Activated naive CD4-positive, alpha-beta T cell treated with anti-CD3 and anti-CD28 coated beads for 36 hours (primary cell): ENCODE measurements at regions of chr1 and their contacts with region 1.

Region 1: GRCh38 chr1:32964461-32965250 is at the start of gene RNF19B:
- DNase-seq: peak; percentile 97
- H3K4me3 Mint-ChIP-seq: peak within 1 kb of the TSS; percentile 86
- H3K27ac Mint-ChIP-seq: peak within 1 kb of the TSS; percentile 82
- H3K4me1 Mint-ChIP-seq: peaks cover 48% of the 10 kb centered on the region
- H3K27me3 Mint-ChIP-seq: no peaks in the 10 kb centered on the region
- total RNA-seq, gene RNF19B: 12.5 to 13.3 TPM

Region 2: DNA sequence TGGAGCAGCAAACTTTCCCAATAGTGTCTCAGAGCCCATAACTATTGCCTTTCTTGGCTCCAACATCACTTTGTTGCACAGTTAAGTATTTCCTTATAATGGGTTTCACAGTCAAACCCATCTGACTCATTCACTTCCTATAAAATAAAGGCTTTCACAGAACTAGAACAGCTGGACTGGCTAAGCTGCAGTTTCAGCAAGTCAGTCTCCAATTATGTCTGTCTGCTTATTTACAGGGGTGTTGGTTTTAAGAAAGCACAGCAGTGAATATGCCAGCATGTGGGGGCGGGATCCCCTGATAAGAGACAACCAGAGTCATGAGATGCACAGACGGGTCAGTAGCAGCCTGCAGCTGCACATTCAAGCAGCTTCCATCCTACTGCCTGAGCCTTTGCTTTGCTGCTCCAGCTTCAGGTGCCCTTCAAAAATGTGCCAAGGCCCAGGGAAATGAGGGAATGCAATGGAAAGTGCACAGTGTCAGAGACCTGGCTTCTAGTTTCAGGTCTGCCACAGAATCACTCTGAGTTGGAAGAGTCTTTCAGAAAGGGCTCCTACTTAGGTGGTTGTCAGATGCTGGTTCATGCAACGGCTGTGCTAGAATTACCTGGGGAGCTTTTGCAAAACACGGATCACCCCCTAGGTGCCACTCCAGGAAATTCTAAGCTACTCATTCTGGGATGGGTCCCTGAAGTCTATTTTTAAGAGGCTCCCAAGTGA is 24.8 kb before region 1 on chr1:
- CTCF ChIA-PET with region 1: interaction called, 3 read pairs
- intact Hi-C with region 1: loop called (anchors 2 kb)
- DNase-seq: peak; percentile 30
- H3K4me3 Mint-ChIP-seq: no peak overlapping the region
- H3K27ac Mint-ChIP-seq: no peak overlapping the region
- H3K4me1 Mint-ChIP-seq: peaks cover 27% of the 10 kb centered on the region
- H3K27me3 Mint-ChIP-seq: no peaks in the 10 kb centered on the region

Region 3: GRCh38 chr1:32992489-32993323 is 28.1 kb after region 1 on chr1:
- CTCF ChIA-PET with region 1: no interaction called
- intact Hi-C with region 1: loop called (anchors 1 kb)
- DNase-seq: peak; percentile 89
- H3K4me3 Mint-ChIP-seq: no peak overlapping the region
- H3K27ac Mint-ChIP-seq: peak overlapping the region; percentile 73
- H3K4me1 Mint-ChIP-seq: peaks cover 32% of the 10 kb centered on the region
- H3K27me3 Mint-ChIP-seq: no peaks in the 10 kb centered on the region

Region 4: GRCh38 chr1:33022650-33023200 is 58.1 kb after region 1 on chr1:
- CTCF ChIA-PET with region 1: no interaction called
- intact Hi-C with region 1: loop called (anchors 2 kb)
- DNase-seq: no peak
- H3K4me3 Mint-ChIP-seq: no peak overlapping the region
- H3K27ac Mint-ChIP-seq: no peak overlapping the region
- H3K4me1 Mint-ChIP-seq: peaks cover 64% of the 10 kb centered on the region
- H3K27me3 Mint-ChIP-seq: no peaks in the 10 kb centered on the region

Region 5: DNA sequence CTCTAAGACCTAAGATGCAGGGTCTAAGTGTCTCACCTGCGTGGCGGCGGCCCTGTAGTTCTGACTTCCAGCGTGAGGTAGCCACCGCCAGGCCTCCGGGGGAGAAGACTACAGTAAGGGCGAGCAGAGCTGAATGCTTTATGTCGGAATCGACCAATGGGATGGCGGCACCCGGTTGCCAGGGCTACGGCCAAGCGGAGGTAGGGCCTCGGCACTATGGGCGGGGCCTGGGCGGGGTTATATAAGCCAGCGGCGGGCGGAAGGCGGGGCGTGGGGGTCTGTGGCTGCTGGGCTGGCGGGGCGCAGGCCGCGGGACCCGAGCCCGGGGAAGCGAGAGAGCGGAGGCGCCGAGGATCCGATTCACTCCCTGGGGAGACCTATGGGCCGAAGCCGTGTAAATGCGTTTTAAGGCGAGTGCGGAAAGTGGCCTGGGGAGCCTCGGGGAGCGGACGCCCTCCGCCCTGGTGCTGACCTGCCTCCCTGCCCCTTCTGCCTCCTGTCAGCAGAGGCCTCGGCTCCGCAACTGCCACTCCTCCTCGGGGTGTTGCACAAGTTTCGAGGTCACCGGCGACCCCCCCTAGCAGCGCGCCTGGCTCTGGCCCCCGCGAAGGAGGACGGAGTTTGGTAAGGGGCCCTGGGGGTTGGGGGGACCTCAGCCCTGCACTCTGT is 116.4 kb after region 1 on chr1 and contains the start of gene AZIN2:
- CTCF ChIA-PET with region 1: no interaction called
- intact Hi-C with region 1: loop called (anchors 1 kb)
- DNase-seq: peak; percentile 98
- H3K4me3 Mint-ChIP-seq: peak within 1 kb of the TSS; percentile 75
- H3K27ac Mint-ChIP-seq: peak within 1 kb of the TSS; percentile 19
- H3K4me1 Mint-ChIP-seq: peaks cover 18% of the 10 kb centered on the region
- H3K27me3 Mint-ChIP-seq: no peaks in the 10 kb centered on the region
- total RNA-seq, gene AZIN2: 1.5 to 1.6 TPM

Region 6: DNA sequence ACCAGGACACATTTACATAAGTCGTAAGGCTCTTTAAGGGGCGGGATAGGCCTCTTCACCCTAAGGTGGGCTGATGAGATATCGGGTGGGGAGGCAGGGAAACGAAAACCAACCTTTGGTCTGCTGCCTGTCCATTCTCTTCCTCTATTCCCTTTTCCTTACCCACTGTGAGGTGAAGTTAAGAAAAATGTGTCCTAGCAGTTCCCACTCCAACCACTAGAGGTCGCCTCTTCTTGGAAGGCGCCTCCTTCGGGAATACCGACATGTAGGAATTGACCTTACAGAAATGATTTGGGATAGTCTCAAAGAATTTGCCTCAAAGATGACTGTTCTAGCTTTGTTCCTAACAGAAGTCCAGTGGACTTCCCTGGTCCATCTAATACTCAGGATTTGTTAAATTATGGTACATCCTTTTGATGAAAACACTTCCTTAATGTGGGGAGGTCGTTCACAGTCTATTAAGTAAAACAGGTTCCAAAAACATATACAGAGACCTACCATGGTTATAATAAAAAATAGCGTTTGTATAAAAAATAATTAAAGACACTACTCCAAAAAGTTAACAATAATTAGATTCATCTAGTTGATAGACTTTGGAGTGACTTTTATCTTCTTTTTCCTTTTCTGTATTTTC is 130.4 kb after region 1 on chr1:
- CTCF ChIA-PET with region 1: no interaction called
- intact Hi-C with region 1: no loop called
- DNase-seq: peak; percentile 40
- H3K4me3 Mint-ChIP-seq: no peak overlapping the region
- H3K27ac Mint-ChIP-seq: no peak overlapping the region
- H3K4me1 Mint-ChIP-seq: peaks cover 28% of the 10 kb centered on the region
- H3K27me3 Mint-ChIP-seq: no peaks in the 10 kb centered on the region

Region 7: DNA sequence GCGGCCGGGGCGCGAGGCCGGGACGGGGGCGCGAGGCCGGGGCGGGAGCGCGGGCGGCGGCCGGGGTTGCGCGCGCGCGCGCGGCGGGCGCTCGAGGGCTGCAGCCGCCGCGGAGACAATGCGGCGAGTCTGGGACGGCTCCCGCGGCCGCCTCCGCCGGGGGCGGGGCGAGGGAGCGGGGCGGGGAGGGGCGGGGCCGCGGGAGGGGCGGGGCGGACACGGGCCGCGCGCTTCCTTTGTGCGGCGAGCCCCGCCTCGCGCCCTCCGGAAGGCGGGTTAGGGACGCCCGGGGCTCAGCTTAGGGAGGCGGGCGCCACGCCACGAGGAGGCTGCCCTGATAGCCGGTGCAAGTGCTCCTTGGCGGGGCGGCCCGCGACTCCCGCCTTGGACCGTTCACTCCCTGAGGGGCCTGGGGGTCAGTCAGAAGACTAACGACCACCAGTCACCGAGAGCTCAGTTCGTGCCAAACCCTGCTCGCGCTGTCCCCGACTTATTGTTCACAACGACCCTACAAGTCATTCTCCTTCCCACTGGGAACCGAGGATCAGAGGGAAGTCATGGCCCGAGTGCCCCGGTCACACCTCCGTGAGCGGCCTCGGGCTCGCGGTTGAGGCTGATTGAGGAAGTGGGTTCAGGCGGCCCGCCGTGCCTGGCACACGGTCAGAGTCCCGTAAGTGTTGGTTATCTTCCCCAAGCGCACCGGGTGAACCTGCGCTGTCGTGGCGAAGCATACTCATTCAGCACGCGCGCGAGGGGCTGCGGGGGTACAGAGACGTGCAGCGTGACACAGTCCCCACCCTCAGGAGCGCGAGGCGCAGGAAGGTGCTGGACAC is 385.3 kb after region 1 on chr1:
- CTCF ChIA-PET with region 1: no interaction called
- intact Hi-C with region 1: loop called (anchors 2 kb)
- DNase-seq: peak; percentile 76
- H3K4me3 Mint-ChIP-seq: peak overlapping the region; percentile 89
- H3K27ac Mint-ChIP-seq: peak overlapping the region; percentile 84
- H3K4me1 Mint-ChIP-seq: peaks cover 45% of the 10 kb centered on the region
- H3K27me3 Mint-ChIP-seq: no peaks in the 10 kb centered on the region

Region 8: GRCh38 chr1:33384040-33384812 is 419.6 kb after region 1 on chr1:
- CTCF ChIA-PET with region 1: no interaction called
- intact Hi-C with region 1: no loop called
- DNase-seq: no peak
- H3K4me3 Mint-ChIP-seq: no peak overlapping the region
- H3K27ac Mint-ChIP-seq: no peak overlapping the region
- H3K4me1 Mint-ChIP-seq: peaks cover 13% of the 10 kb centered on the region
- H3K27me3 Mint-ChIP-seq: peaks cover 5% of the 10 kb centered on the region